ENCODE measurements at regions of chr7 and their contacts with region 1.

Region 1: GRCh38 chr7:150737265-150738055 is at the start of gene GIMAP5:
- DNase-seq: peak in 4 of 5 donors; percentile 58 to 74 (median 61)
- H3K4me3 ChIP-seq: peak within 1 kb of the TSS; percentile 81 to 82
- H3K4me3 Mint-ChIP-seq: peak within 1 kb of the TSS; percentile 92 to 100 (median 98)
- H3K27ac ChIP-seq: peak within 1 kb of the TSS; percentile 83
- H3K27ac Mint-ChIP-seq: peak within 1 kb of the TSS; percentile 86 to 98 (median 96)
- H3K4me1 ChIP-seq: peaks cover 64% of the 10 kb centered on the region
- H3K4me1 Mint-ChIP-seq: peaks cover 55 to 94% (median 64%) of the 10 kb centered on the region in 4 donors
- H3K27me3 ChIP-seq: no peaks in the 10 kb centered on the region
- H3K27me3 Mint-ChIP-seq: no peaks in the 10 kb centered on the region
- total RNA-seq, gene GIMAP5: 296 to 297 TPM

Region 2: GRCh38 chr7:149707448-149707886 is 1030.0 kb before region 1 on chr7:
- CTCF ChIA-PET with region 1: no interaction called
- POLR2A ChIA-PET with region 1: no interaction called
- intact Hi-C with region 1: no loop called
- DNase-seq: no peak
- H3K4me3 ChIP-seq: no peak overlapping the region
- H3K4me3 Mint-ChIP-seq: no peak overlapping the region
- H3K27ac ChIP-seq: no peak overlapping the region
- H3K27ac Mint-ChIP-seq: no peak overlapping the region
- H3K4me1 ChIP-seq: no peaks in the 10 kb centered on the region
- H3K4me1 Mint-ChIP-seq: no peaks in the 10 kb centered on the region
- H3K27me3 ChIP-seq: no peaks in the 10 kb centered on the region
- H3K27me3 Mint-ChIP-seq: peaks cover 10 to 18% of the 10 kb centered on the region in 2 donors

Region 3: GRCh38 chr7:149838224-149838947 is 899.1 kb before region 1 on chr7 and contains the start of gene ZNF862:
- CTCF ChIA-PET with region 1: no interaction called
- POLR2A ChIA-PET with region 1: no interaction called
- intact Hi-C with region 1: no loop called
- DNase-seq: peak; percentile 93 to 96 (median 95)
- H3K4me3 ChIP-seq: peak within 1 kb of the TSS; percentile 21 to 79
- H3K4me3 Mint-ChIP-seq: peak within 1 kb of the TSS; percentile 91 to 97 (median 94)
- H3K27ac ChIP-seq: peak within 1 kb of the TSS; percentile 69
- H3K27ac Mint-ChIP-seq: peak within 1 kb of the TSS; percentile 88 to 97 (median 94)
- H3K4me1 ChIP-seq: peaks cover 16% of the 10 kb centered on the region
- H3K4me1 Mint-ChIP-seq: peaks cover 24 to 44% (median 39%) of the 10 kb centered on the region in 4 donors
- H3K27me3 ChIP-seq: no peaks in the 10 kb centered on the region
- H3K27me3 Mint-ChIP-seq: peaks cover 5 to 10% of the 10 kb centered on the region in 2 donors
- total RNA-seq, gene ZNF862: 84.2 to 88.6 TPM

Region 4: GRCh38 chr7:150580638-150581394 is 156.6 kb before region 1 on chr7:
- CTCF ChIA-PET with region 1: no interaction called
- POLR2A ChIA-PET with region 1: interaction called, 10 read pairs
- intact Hi-C with region 1: no loop called
- DNase-seq: no peak
- H3K4me3 ChIP-seq: no peak overlapping the region
- H3K4me3 Mint-ChIP-seq: peak overlapping the region in 3 of 8 donors; percentile 26 to 33 (median 33)
- H3K27ac ChIP-seq: no peak overlapping the region
- H3K27ac Mint-ChIP-seq: peak overlapping the region; percentile 47 to 85 (median 68)
- H3K4me1 ChIP-seq: peaks cover 14% of the 10 kb centered on the region
- H3K4me1 Mint-ChIP-seq: peaks cover 22 to 81% (median 36%) of the 10 kb centered on the region in 4 donors
- H3K27me3 ChIP-seq: no peaks in the 10 kb centered on the region
- H3K27me3 Mint-ChIP-seq: no peaks in the 10 kb centered on the region

Region 5: GRCh38 chr7:150620617-150621371 is 116.7 kb before region 1 on chr7:
- CTCF ChIA-PET with region 1: no interaction called
- POLR2A ChIA-PET with region 1: interaction called, 18 read pairs
- intact Hi-C with region 1: no loop called
- DNase-seq: no peak
- H3K4me3 ChIP-seq: no peak overlapping the region
- H3K4me3 Mint-ChIP-seq: peak overlapping the region; percentile 2 to 63 (median 44)
- H3K27ac ChIP-seq: no peak overlapping the region
- H3K27ac Mint-ChIP-seq: peak overlapping the region; percentile 70 to 92 (median 86)
- H3K4me1 ChIP-seq: peaks cover 41% of the 10 kb centered on the region
- H3K4me1 Mint-ChIP-seq: peaks cover 42 to 61% (median 54%) of the 10 kb centered on the region in 4 donors
- H3K27me3 ChIP-seq: no peaks in the 10 kb centered on the region
- H3K27me3 Mint-ChIP-seq: no peaks in the 10 kb centered on the region

Region 6: GRCh38 chr7:150675714-150676113 is 61.7 kb before region 1 on chr7:
- CTCF ChIA-PET with region 1: interaction called, 4 read pairs
- POLR2A ChIA-PET with region 1: interaction called, 149 read pairs
- intact Hi-C with region 1: no loop called
- DNase-seq: no peak
- H3K4me3 ChIP-seq: no peak overlapping the region
- H3K4me3 Mint-ChIP-seq: peak overlapping the region; percentile 39 to 89 (median 61)
- H3K27ac ChIP-seq: peak overlapping the region; percentile 18
- H3K27ac Mint-ChIP-seq: peak overlapping the region; percentile 26 to 92 (median 86)
- H3K4me1 ChIP-seq: peaks cover 75% of the 10 kb centered on the region
- H3K4me1 Mint-ChIP-seq: peaks cover 55 to 87% (median 70%) of the 10 kb centered on the region in 4 donors
- H3K27me3 ChIP-seq: no peaks in the 10 kb centered on the region
- H3K27me3 Mint-ChIP-seq: no peaks in the 10 kb centered on the region